ENCODE measurements at regions of chr19 and their contacts with region 1.

Region 1: GRCh38 chr19:35716801-35717666 is 769 bp upstream of the KMT2B start:
- DNase-seq: peak; percentile 99
- H3K4me3 Mint-ChIP-seq: peak overlapping the region; percentile 92
- H3K27ac Mint-ChIP-seq: peak overlapping the region; percentile 93
- H3K4me1 Mint-ChIP-seq: peaks cover 50% of the 10 kb centered on the region
- H3K27me3 Mint-ChIP-seq: no peaks in the 10 kb centered on the region

Region 2: DNA sequence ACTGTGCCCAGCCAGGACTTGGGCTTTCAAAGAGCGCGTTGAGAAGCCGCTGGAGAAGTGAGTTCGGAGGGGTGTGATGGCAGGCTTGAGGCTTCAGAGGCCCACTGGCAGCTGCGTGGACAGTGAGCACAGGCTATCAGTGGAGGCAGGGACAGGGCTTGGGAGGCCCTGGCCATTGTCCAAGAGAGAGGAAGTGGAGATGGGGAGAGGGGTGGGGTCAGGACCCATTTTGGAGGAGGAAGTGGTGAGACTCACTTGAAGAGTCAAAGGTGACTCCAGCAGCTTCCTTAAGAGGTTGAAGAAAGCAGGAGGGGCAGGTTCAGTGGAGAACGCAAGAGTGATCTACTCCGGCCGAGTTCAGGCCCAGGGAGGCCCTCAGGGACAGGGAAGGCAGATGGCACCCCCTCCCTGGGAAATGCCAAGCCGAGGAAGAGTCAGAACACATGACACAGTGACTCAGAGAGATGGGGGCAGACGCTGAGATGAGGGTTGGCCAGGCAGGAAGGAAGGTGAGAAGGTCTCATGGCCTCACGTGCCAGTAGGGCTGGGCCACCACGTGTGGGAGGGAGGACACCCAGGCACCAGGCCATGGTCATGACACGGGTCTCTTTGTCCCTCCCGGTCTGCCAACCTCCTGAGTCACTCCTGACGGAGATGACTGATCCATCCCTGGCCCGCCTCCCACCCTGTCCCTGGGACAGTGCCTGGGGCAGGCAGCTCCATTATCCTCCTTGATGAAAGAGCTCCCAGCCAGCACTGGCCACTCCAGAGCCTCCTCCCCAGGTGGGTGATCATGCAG is 398.2 kb before region 1 on chr19:
- intact Hi-C with region 1: no loop called
- DNase-seq: no peak
- H3K4me3 Mint-ChIP-seq: peak overlapping the region; percentile 5
- H3K27ac Mint-ChIP-seq: peak overlapping the region; percentile 58
- H3K4me1 Mint-ChIP-seq: peaks cover 7% of the 10 kb centered on the region
- H3K27me3 Mint-ChIP-seq: peaks cover 2% of the 10 kb centered on the region

Region 3: GRCh38 chr19:35545001-35545911 is 171.8 kb before region 1 on chr19 and contains the start of gene TMEM147:
- intact Hi-C with region 1: loop called (anchors 5 kb)
- DNase-seq: peak; percentile 96
- H3K4me3 Mint-ChIP-seq: peak within 1 kb of the TSS; percentile 97
- H3K27ac Mint-ChIP-seq: peak within 1 kb of the TSS; percentile 96
- H3K4me1 Mint-ChIP-seq: peaks cover 29% of the 10 kb centered on the region
- H3K27me3 Mint-ChIP-seq: no peaks in the 10 kb centered on the region
- total RNA-seq, gene TMEM147: 132 and 134 TPM in 2 replicates

Region 4: DNA sequence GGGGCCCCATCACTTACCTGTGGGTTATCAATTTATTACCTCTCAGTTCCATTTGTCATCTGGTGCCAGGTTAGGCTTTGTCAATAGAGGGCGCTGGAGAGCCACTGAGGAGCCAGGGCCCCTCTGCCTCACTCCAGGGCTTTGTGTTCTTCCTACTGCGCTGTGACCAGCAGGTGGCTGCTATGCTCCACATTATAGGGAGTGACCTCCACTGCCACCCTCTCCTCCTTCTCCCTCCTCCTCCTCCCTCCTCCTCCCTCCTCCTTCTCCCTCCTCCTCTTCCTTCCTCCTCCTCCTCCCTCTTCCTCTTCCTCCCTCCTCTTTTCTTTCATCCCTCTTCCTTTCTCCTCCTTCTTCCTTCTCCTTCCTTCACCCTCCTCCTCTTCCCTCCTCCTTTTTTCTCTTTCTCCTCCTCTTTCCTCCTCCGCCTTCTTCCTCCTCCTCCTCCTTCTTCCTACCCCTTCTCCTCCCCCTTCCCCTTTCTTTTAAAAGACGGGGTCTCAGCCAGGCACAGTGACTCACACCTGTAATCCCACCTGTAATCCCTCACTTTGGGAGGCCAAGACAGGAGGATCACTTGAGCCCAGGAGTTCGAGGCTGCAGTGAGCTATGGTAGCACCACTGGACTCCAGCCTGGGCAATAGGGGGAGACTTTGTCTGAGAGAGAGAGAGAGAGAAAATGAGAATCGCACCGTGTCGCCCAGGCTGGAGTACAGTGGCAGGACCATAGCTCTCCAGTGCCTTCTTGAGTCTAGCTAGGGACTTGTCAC is 23.0 kb before region 1 on chr19:
- intact Hi-C with region 1: loop called (anchors 1 kb)
- DNase-seq: peak; percentile 97
- H3K4me3 Mint-ChIP-seq: no peak overlapping the region
- H3K27ac Mint-ChIP-seq: peak overlapping the region; percentile 35
- H3K4me1 Mint-ChIP-seq: peaks cover 14% of the 10 kb centered on the region
- H3K27me3 Mint-ChIP-seq: no peaks in the 10 kb centered on the region

Region 5: GRCh38 chr19:35740423-35741202 is 23.6 kb after region 1 on chr19:
- intact Hi-C with region 1: loop called (anchors 1 kb)
- DNase-seq: peak; percentile 99
- H3K4me3 Mint-ChIP-seq: peak overlapping the region; percentile 91
- H3K27ac Mint-ChIP-seq: peak overlapping the region; percentile 97
- H3K4me1 Mint-ChIP-seq: peaks cover 44% of the 10 kb centered on the region
- H3K27me3 Mint-ChIP-seq: no peaks in the 10 kb centered on the region

Region 6: GRCh38 chr19:35757749-35758608 is 40.9 kb after region 1 on chr19 and contains the start of gene PROSER3:
- intact Hi-C with region 1: loop called (anchors 1 kb)
- DNase-seq: peak; percentile 100
- H3K4me3 Mint-ChIP-seq: peak within 1 kb of the TSS; percentile 95
- H3K27ac Mint-ChIP-seq: peak within 1 kb of the TSS; percentile 98
- H3K4me1 Mint-ChIP-seq: peaks cover 25% of the 10 kb centered on the region
- H3K27me3 Mint-ChIP-seq: peaks cover 2% of the 10 kb centered on the region
- total RNA-seq, gene PROSER3: 35.2 and 43.6 TPM in 2 replicates

Region 7: GRCh38 chr19:35899547-35900214 is 182.6 kb after region 1 on chr19:
- intact Hi-C with region 1: loop called (anchors 2 kb)
- DNase-seq: peak; percentile 96
- H3K4me3 Mint-ChIP-seq: peak overlapping the region; percentile 98
- H3K27ac Mint-ChIP-seq: peak overlapping the region; percentile 98
- H3K4me1 Mint-ChIP-seq: peaks cover 50% of the 10 kb centered on the region
- H3K27me3 Mint-ChIP-seq: no peaks in the 10 kb centered on the region

Region 8: GRCh38 chr19:36114763-36115452 is 397.9 kb after region 1 on chr19 and contains the start of gene POLR2I:
- intact Hi-C with region 1: loop called (anchors 1 kb)
- DNase-seq: peak; percentile 99
- H3K4me3 Mint-ChIP-seq: peak within 1 kb of the TSS; percentile 94
- H3K27ac Mint-ChIP-seq: peak within 1 kb of the TSS; percentile 95
- H3K4me1 Mint-ChIP-seq: peaks cover 29% of the 10 kb centered on the region
- H3K27me3 Mint-ChIP-seq: peaks cover 4% of the 10 kb centered on the region
- total RNA-seq, gene POLR2I: 83.4 and 86.3 TPM in 2 replicates

Measured in activated CD4-positive, alpha-beta T cell treated with anti-CD3 and anti-CD28 coated beads, Interleukin-2, amount 10 ng/mL, durations not matched to agents 24 days and 14 days (primary cell).